Heart left ventricle (tissue), 16 donors: ENCODE measurements at regions of chr4 and their contacts with region 1.

Region 1: GRCh38 chr4:1899149-1900086 is 28.2 kb downstream of the NSD2 start:
- DNase-seq: peak; percentile 66 to 78 (median 67)
- ATAC-seq: peak; percentile 71 to 93 (median 87)
- H3K4me3 ChIP-seq: no peak overlapping the region
- H3K27ac ChIP-seq: no peak overlapping the region
- H3K4me1 ChIP-seq: peaks cover 0 to 14% (median 0%) of the 10 kb centered on the region in 12 donors
- H3K27me3 ChIP-seq: no peaks in the 10 kb centered on the region
- CTCF ChIP-seq: peak; percentile 72 to 96 (median 89)
- POLR2A ChIP-seq: no peak

Region 2: DNA sequence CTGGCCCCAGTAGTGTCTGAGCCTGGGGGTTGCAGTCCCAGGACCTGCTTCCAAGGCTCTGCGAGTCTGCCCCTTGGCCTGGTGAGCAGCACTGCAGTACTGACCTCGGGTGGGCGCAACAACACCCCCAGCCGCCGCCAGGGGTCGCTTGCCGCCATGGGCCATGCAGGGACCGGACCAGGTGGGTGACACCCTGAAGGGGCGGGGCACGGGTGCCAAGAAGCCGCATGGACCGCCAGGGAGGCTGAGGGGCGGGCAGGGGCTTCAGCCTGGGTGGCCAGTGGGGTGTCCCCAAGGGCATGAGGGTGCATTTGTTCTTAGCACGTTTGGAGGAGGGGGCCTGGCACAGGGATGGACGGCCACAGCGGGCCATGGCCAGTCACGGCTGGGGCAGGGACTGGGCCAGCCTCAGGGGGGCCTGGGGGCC is 153.1 kb before region 1 on chr4:
- intact Hi-C with region 1: loop called (anchors 1 to 5 kb)
- DNase-seq: peak; percentile 55 to 87 (median 71)
- ATAC-seq: peak; percentile 35 to 79 (median 70)
- H3K4me3 ChIP-seq: no peak overlapping the region
- H3K27ac ChIP-seq: no peak overlapping the region
- H3K4me1 ChIP-seq: peaks cover 0 to 11% (median 2%) of the 10 kb centered on the region in 12 donors
- H3K27me3 ChIP-seq: peaks cover 0 to 7% (median 0%) of the 10 kb centered on the region in 9 donors
- CTCF ChIP-seq: peak; percentile 68 to 88 (median 78)
- POLR2A ChIP-seq: no peak

Region 3: GRCh38 chr4:1809754-1810511 is 89.5 kb before region 1 on chr4:
- intact Hi-C with region 1: loop called in 2 of 10 experiments (anchors 2 to 10 kb)
- DNase-seq: peak; percentile 54 to 83 (median 66)
- ATAC-seq: peak; percentile 53 to 85 (median 68)
- H3K4me3 ChIP-seq: no peak overlapping the region
- H3K27ac ChIP-seq: no peak overlapping the region
- H3K4me1 ChIP-seq: peaks cover 0 to 2% (median 0%) of the 10 kb centered on the region in 12 donors
- H3K27me3 ChIP-seq: no peaks in the 10 kb centered on the region
- CTCF ChIP-seq: peak; percentile 63 to 88 (median 80)
- POLR2A ChIP-seq: no peak

Region 4: GRCh38 chr4:1842993-1843448 is 56.4 kb before region 1 on chr4:
- intact Hi-C with region 1: loop called in 1 of 10 experiments (anchors 2 kb)
- DNase-seq: peak in 2 of 5 donors; percentile 55 to 56
- ATAC-seq: peak; percentile 51 to 73 (median 58)
- H3K4me3 ChIP-seq: no peak overlapping the region
- H3K27ac ChIP-seq: peak overlapping the region in 10 of 12 donors; percentile 26 to 69 (median 50)
- H3K4me1 ChIP-seq: peaks cover 0 to 28% (median 16%) of the 10 kb centered on the region in 12 donors
- H3K27me3 ChIP-seq: no peaks in the 10 kb centered on the region
- CTCF ChIP-seq: no peak
- POLR2A ChIP-seq: no peak

Region 5: GRCh38 chr4:1856042-1856788 is 43.2 kb before region 1 on chr4 and contains the start of gene LETM1:
- intact Hi-C with region 1: loop called in 8 of 10 experiments (anchors 5 kb)
- DNase-seq: peak; percentile 96 to 98 (median 97)
- ATAC-seq: peak; percentile 96 to 98 (median 97)
- H3K4me3 ChIP-seq: peak within 1 kb of the TSS; percentile 55 to 99 (median 84)
- H3K27ac ChIP-seq: peak within 1 kb of the TSS; percentile 26 to 94 (median 88)
- H3K4me1 ChIP-seq: peaks cover 0 to 50% (median 24%) of the 10 kb centered on the region in 12 donors
- H3K27me3 ChIP-seq: no peaks in the 10 kb centered on the region
- CTCF ChIP-seq: peak in 3 of 12 donors; percentile 3 to 31 (median 26)
- POLR2A ChIP-seq: peak in 1 of 2 donors; percentile 81
- total RNA-seq, gene LETM1: 35.0 to 54.7 (median 43.4) TPM